A673 (cell line): ENCODE measurements at regions of chr12 and their contacts with region 1.

Region 1: DNA sequence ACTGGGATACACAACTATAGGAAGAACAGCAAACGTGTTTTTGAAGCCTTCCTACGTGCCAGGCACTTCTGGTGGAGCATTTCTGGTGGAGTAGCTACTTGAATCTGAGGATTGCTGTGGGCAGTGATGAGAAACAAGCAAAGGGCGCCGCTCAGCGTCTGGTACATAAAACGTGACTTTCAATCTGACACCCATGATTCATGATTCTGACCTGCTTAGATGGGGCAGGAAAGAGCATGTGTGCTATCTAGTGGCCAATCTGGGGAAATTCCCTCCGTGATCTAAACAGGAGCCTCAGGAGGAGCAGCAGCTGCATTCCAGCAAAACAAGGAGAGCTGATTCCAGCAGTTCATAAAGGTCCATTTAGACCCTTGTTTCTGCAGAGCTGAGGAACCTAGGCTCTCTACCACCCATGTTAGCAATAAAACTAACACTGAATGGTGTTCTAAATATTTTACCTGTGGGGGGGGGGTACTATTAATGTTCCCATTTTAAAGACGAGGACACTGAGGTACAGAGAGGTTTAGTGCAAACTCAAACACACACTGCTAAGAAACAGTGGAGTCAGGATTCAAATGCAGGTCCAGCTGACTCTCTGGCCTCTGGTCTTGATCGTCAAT is 37.8 kb downstream of the PAH start:
- DNase-seq: peak; percentile 77
- H3K4me3 ChIP-seq: no peak overlapping the region
- H3K27ac ChIP-seq: no peak overlapping the region
- H3K4me1 ChIP-seq: no peaks in the 10 kb centered on the region
- H3K27me3 ChIP-seq: peaks cover 8% of the 10 kb centered on the region
- CTCF ChIP-seq: peak; percentile 61

Region 2: GRCh38 chr12:101670007-101670687 is 1209.1 kb before region 1 on chr12:
- CTCF ChIA-PET with region 1: interaction called, 15 read pairs
- POLR2A ChIA-PET with region 1: no interaction called
- intact Hi-C with region 1: no loop called
- DNase-seq: peak; percentile 72
- H3K4me3 ChIP-seq: no peak overlapping the region
- H3K27ac ChIP-seq: no peak overlapping the region
- H3K4me1 ChIP-seq: no peaks in the 10 kb centered on the region
- H3K27me3 ChIP-seq: no peaks in the 10 kb centered on the region
- CTCF ChIP-seq: peak; percentile 75

Region 3: DNA sequence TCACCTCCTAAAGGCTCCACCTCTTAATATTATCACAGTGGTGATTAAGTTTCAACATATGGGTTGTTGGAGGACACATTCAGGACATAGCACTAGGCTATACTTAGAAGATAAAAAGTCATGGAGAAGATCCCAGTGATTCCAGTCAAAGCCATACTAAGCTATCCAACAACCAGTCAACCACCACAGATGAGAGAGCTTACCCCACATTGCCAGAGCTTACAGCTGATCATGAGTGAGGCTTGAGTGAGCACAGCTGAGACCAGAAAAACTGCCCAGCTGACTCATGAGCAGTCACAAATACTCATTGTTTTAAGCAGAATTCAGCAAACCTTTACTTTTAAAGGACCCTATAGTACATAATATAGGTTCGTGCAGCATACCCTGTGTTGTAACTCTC is 916.8 kb before region 1 on chr12:
- CTCF ChIA-PET with region 1: no interaction called
- POLR2A ChIA-PET with region 1: no interaction called
- intact Hi-C with region 1: no loop called
- DNase-seq: no peak
- H3K4me3 ChIP-seq: no peak overlapping the region
- H3K27ac ChIP-seq: no peak overlapping the region
- H3K4me1 ChIP-seq: no peaks in the 10 kb centered on the region
- H3K27me3 ChIP-seq: no peaks in the 10 kb centered on the region
- CTCF ChIP-seq: no peak